Activated CD8-positive, alpha-beta T cell treated with anti-CD3 and anti-CD28 coated beads, Interleukin-2, amount 10 ng/mL, durations not matched to agents 7 days and 5 days (primary cell): ENCODE measurements at regions of chr12 and their contacts with region 1.

Region 1: GRCh38 chr12:110449799-110450497 is at the start of gene ARPC3:
- DNase-seq: peak; percentile 98
- ATAC-seq: peak; percentile 97
- H3K4me3 Mint-ChIP-seq: peak within 1 kb of the TSS; percentile 100
- H3K27ac Mint-ChIP-seq: peak within 1 kb of the TSS; percentile 100
- H3K4me1 Mint-ChIP-seq: peaks cover 45% of the 10 kb centered on the region
- H3K27me3 Mint-ChIP-seq: no peaks in the 10 kb centered on the region
- total RNA-seq, gene ARPC3: 437 to 458 TPM

Region 2: DNA sequence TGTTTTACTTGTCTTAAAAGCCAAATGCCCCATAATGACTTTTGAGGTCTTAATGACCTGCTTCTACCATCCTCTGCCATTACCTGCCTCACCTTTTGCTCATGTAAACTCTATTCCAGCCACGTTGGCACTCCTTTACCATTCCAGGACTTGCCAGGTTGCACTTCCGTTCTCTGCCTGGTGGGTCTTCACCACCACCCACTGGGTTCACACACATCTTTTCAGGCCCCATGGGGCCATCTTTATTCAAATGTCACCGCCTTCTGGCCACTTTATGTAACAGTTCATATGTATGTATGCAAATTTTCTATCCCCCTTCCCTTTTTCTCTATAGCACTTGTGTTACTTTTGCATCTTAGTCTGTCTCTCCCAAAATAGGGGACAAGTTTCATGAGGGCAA is 111.2 kb before region 1 on chr12:
- CTCF ChIA-PET with region 1: no interaction called
- POLR2A ChIA-PET with region 1: no interaction called
- DNase-seq: no peak
- ATAC-seq: no peak
- H3K4me3 Mint-ChIP-seq: no peak overlapping the region
- H3K27ac Mint-ChIP-seq: no peak overlapping the region
- H3K4me1 Mint-ChIP-seq: no peaks in the 10 kb centered on the region
- H3K27me3 Mint-ChIP-seq: no peaks in the 10 kb centered on the region

Region 3: DNA sequence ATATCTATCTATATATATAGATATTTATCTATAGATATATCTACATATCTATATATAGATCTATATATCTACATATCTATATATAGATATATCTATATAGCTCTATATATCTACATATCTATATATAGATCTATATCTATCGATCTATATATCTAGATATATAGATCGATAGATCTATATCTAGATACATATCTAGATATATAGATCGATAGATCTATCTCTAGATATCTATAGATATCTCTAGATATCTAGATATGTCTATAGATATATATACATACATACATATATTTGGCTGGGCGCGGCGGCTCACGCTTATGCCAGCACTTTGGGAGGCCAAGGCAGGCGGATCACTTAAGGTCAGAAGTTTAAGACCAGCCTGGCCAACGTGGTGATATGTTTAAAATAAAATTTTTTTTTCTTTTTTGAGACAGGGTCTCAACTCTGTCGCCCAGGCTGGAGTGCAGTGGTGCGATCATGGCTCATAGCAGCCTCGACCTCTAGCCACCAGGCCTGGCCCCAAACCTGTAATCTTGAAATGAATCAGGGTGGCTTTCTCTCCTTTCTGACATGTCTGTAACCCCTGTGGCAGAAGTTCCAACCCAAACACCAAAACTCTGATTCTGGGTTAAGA is 17.9 kb before region 1 on chr12:
- CTCF ChIA-PET with region 1: interaction called, 23 read pairs
- POLR2A ChIA-PET with region 1: interaction called, 27 read pairs
- DNase-seq: no peak
- ATAC-seq: no peak
- H3K4me3 Mint-ChIP-seq: no peak overlapping the region
- H3K27ac Mint-ChIP-seq: no peak overlapping the region
- H3K4me1 Mint-ChIP-seq: no peaks in the 10 kb centered on the region
- H3K27me3 Mint-ChIP-seq: no peaks in the 10 kb centered on the region

Region 4: DNA sequence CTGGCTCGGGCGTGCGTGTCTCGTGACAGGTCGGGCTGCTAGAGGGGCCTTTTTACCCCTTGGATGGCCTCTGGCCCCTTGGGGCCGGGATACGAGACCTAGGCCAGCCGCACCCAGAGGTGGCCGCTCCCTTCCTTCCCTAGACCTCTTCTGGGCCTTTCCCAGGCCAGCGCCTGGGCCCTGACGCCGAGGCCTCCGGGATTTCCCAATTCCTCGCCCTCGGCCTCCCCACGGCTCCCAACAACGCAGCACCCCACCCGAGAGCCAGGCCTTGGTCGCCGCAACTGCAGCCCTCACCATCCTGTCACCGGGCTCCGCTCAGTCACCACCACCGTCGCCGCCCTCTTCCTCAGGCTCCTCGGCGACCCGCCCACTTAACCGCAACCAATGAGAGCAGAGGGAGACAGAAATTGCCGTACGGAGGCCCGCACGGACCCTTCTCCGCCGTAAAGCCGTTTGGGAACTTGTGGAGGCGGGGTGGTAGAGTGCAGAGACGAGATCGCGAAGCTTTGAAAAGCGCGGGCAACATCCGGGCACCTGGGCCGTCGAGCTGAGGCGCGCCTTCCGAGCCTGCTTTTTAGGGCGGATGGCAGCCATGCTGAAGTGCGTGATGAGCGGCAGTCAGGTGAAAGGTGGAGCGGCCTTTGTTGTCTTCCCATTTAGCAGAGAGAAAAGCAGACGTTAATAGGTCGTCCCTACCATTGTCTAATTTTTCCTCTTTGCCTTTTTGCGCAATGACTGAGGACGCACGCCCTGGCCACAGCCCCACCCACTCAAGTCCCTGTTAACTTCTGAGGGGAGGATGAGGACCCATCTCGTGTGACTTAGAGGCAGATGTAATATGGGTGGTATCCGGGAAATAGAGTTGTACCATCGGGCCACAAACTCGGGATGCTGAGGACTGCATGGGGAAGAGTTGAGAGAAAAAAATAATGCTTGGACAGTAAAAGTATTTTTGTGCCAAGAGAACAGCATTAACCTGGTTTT is 52.1 kb after region 1 on chr12 and contains the starts of genes RAD9B and VPS29:
- CTCF ChIA-PET with region 1: interaction called, 19 read pairs
- POLR2A ChIA-PET with region 1: interaction called, 28 read pairs
- DNase-seq: peak; percentile 100
- ATAC-seq: peak; percentile 98
- H3K4me3 Mint-ChIP-seq: peak within 1 kb of the TSS; percentile 97
- H3K27ac Mint-ChIP-seq: peak within 1 kb of the TSS; percentile 99
- H3K4me1 Mint-ChIP-seq: peaks cover 40% of the 10 kb centered on the region
- H3K27me3 Mint-ChIP-seq: no peaks in the 10 kb centered on the region
- total RNA-seq, gene RAD9B: 0.68 to 2.3 TPM
- total RNA-seq, gene VPS29: 126 to 128 TPM

Region 5: GRCh38 chr12:110537605-110538409 is 87.9 kb after region 1 on chr12:
- CTCF ChIA-PET with region 1: interaction called, 13 read pairs
- POLR2A ChIA-PET with region 1: interaction called, 4 read pairs
- DNase-seq: no peak
- ATAC-seq: no peak
- H3K4me3 Mint-ChIP-seq: no peak overlapping the region
- H3K27ac Mint-ChIP-seq: peak overlapping the region; percentile 43
- H3K4me1 Mint-ChIP-seq: peaks cover 18% of the 10 kb centered on the region
- H3K27me3 Mint-ChIP-seq: no peaks in the 10 kb centered on the region

Region 6: GRCh38 chr12:110583137-110584059 is 133.4 kb after region 1 on chr12 and contains the start of gene PPTC7:
- CTCF ChIA-PET with region 1: interaction called, 12 read pairs
- POLR2A ChIA-PET with region 1: interaction called, 7 read pairs
- DNase-seq: peak; percentile 98
- ATAC-seq: peak; percentile 95
- H3K4me3 Mint-ChIP-seq: peak within 1 kb of the TSS; percentile 92
- H3K27ac Mint-ChIP-seq: peak within 1 kb of the TSS; percentile 88
- H3K4me1 Mint-ChIP-seq: peaks cover 64% of the 10 kb centered on the region
- H3K27me3 Mint-ChIP-seq: no peaks in the 10 kb centered on the region
- total RNA-seq, gene PPTC7: 24.4 to 26.8 TPM

Region 7: GRCh38 chr12:110613771-110614684 is 164.1 kb after region 1 on chr12 and contains the start of gene TCTN1:
- CTCF ChIA-PET with region 1: interaction called, 27 read pairs
- POLR2A ChIA-PET with region 1: interaction called, 7 read pairs
- DNase-seq: peak; percentile 99
- ATAC-seq: peak; percentile 100
- H3K4me3 Mint-ChIP-seq: peak within 1 kb of the TSS; percentile 83
- H3K27ac Mint-ChIP-seq: peak within 1 kb of the TSS; percentile 92
- H3K4me1 Mint-ChIP-seq: peaks cover 17% of the 10 kb centered on the region
- H3K27me3 Mint-ChIP-seq: no peaks in the 10 kb centered on the region
- total RNA-seq, gene TCTN1: 5.9 to 7.9 TPM